ENCODE measurements at regions of chr11 and their contacts with region 1.

Region 1: DNA sequence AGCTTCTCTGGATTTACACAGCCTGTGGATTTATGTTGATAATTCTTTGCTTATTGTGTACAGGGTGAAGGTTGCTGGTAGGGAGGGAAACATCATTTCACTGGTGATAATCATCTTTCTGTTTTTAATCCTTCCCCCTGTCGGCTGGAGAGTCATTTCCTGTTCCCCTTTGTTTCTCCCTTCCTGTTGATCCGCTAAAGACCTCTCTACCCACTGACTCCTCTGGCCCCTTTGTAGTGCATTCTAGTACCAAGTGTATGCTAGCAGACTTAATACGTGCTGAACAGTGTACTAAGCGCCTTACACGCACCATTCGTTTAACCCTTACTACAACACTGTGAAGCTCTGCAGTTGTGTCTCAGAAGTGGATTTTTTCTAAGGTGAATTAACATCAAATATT is 19.0 kb upstream of the OR9Q1 start:
- DNase-seq: no peak
- ATAC-seq: peak; percentile 61

Region 2: DNA sequence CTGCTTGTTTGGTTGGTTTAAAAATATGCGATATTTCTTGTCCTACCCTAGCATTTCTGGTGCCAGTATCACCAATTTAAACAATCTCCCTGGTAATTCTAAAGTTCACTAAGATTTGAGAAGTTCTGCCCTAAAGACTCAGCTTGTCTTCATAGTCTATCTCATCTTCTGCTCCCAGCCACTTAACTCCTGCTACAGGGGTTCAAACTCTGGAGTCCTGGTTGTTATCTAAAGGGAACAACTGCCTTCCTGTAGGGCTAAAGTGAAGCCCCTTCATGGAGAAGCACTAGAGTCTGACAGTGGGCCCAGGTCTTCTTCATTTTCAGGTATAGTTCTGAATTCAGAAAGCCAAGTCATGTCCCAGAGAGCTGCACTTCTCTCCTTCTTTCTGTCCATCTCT is 169.8 kb before region 1 on chr11:
- intact Hi-C with region 1: loop called (anchors 5 kb)
- DNase-seq: no peak
- ATAC-seq: no peak